B cell (primary cell): ENCODE measurements at regions of chr11 and their contacts with region 1.

Region 1: DNA sequence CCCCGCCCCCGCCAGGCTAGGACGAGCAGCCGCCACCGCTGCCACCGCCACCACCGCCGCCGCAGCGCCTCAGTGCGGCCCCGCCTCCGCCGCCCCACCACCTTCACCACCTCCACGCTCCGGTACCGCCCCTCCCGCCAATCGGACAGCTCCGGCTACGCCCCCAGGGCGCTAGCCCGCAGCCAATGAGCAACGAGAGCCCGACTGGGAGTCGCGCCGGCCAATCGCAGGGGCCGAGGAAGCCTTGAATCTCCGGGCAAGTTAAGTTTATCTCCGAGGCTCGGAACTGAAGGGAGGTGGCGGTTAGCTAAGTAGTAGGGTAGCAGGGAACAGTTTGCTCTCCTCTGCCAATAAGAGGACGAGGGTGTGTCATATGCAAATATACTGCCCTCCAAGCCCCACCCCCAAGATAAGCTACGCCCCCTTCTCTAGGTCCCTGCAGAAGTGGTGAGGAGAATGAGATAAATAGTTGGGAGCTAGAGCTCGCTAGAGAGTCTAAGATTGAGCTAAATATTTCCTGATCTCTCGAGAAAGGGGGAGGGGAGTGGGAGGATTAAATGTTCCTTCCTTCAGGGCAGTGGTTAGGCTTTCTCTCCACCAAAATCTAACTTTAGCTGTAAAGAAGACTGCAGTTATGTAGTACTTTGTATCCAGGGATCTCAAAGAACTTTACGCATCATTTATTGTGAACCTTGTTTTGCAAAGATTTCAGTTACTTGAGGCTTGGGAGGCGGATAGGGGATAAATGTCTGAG is at the start of gene SESN3:
- DNase-seq: peak; percentile 99
- ATAC-seq: peak; percentile 83
- H3K4me3 ChIP-seq: peak within 1 kb of the TSS; percentile 73 to 94 (median 88)
- H3K4me3 Mint-ChIP-seq: no peak within 1 kb of the TSS
- H3K27ac ChIP-seq: peak within 1 kb of the TSS; percentile 94 to 96
- H3K27ac Mint-ChIP-seq: peak within 1 kb of the TSS; percentile 95
- H3K4me1 ChIP-seq: peaks cover 29 to 32% of the 10 kb centered on the region in 2 donors
- H3K4me1 Mint-ChIP-seq: peaks cover 31% of the 10 kb centered on the region
- H3K27me3 ChIP-seq: no peaks in the 10 kb centered on the region
- H3K27me3 Mint-ChIP-seq: no peaks in the 10 kb centered on the region
- CTCF ChIP-seq: no peak
- total RNA-seq, gene SESN3: 519 and 537 TPM in 2 replicates

Region 2: DNA sequence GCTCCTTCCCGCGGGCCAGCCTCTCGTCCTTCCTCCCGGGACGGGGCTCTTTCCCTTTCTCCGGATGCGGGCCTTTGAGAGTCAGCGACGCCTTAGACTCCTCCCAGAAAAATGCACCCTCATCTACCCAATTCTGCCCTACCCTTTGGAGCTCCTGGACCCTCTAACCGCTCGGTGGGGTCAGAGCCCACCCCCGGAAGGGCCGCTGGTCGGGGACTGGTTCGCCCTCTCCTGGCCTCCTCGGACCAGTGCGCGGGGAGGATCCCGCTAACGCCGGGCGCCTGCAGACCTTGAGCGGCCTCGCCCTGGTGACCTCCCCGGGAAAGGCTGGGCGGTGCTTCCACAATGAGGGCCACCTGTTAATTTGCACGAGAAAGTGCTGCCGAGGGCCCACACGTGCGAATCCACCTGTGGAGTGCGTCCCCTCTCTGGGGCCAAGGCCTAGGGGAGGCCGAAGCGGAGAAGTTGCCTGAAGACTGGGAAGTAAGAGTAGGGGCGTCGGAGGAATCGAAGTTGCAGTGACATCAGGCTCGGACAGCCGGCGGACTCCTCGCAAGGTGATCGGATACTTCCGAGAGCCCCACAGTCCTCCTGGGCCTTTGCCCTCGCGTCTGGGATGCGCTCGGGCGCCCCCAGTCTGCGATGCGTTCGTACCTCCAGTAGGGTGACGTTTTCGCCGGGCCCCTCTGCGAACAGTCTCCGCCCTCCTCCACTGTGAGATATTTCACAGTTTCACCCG is 80.2 kb before region 1 on chr11:
- CTCF ChIA-PET with region 1: interaction called, 29 read pairs
- POLR2A ChIA-PET with region 1: interaction called, 4 read pairs
- intact Hi-C with region 1: loop called (anchors 1 kb)
- DNase-seq: peak; percentile 96
- ATAC-seq: peak; percentile 90
- H3K4me3 ChIP-seq: peak overlapping the region; percentile 52 to 91 (median 82)
- H3K4me3 Mint-ChIP-seq: peak overlapping the region; percentile 95
- H3K27ac ChIP-seq: peak overlapping the region; percentile 88 to 91
- H3K27ac Mint-ChIP-seq: peak overlapping the region; percentile 96
- H3K4me1 ChIP-seq: peaks cover 28 to 43% of the 10 kb centered on the region in 2 donors
- H3K4me1 Mint-ChIP-seq: peaks cover 46% of the 10 kb centered on the region
- H3K27me3 ChIP-seq: no peaks in the 10 kb centered on the region
- H3K27me3 Mint-ChIP-seq: no peaks in the 10 kb centered on the region
- CTCF ChIP-seq: peak; percentile 86

Region 3: DNA sequence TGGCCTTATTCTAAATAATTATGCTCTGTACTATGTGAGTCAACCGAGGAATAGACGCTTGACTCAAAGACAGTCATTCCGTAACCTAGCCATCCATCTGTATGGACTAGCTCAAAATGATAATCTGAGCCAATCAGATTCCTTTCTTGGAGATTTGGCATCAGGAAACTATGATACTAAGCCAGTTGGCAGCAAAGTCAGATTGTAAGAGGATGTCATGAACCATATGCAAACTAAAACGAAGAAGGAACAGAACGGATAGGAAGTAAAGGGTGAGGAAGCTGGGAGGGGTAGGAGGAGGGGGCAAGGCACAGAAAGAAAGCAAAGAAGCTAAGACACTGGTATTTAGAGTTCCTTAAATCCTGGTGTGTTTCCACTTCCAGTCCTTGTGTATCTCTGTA is 10.4 kb after region 1 on chr11:
- CTCF ChIA-PET with region 1: interaction called, 8 read pairs
- POLR2A ChIA-PET with region 1: interaction called, 7 read pairs
- intact Hi-C with region 1: loop called (anchors 1 kb)
- DNase-seq: peak; percentile 40
- ATAC-seq: peak; percentile 68
- H3K4me3 ChIP-seq: peak overlapping the region in 3 of 5 experiments; percentile 6 to 59 (median 27)
- H3K4me3 Mint-ChIP-seq: peak overlapping the region; percentile 47
- H3K27ac ChIP-seq: peak overlapping the region; percentile 8 to 58
- H3K27ac Mint-ChIP-seq: peak overlapping the region; percentile 78
- H3K4me1 ChIP-seq: peaks cover 14 to 15% of the 10 kb centered on the region in 2 donors
- H3K4me1 Mint-ChIP-seq: peaks cover 22% of the 10 kb centered on the region
- H3K27me3 ChIP-seq: no peaks in the 10 kb centered on the region
- H3K27me3 Mint-ChIP-seq: no peaks in the 10 kb centered on the region
- CTCF ChIP-seq: no peak

Region 4: DNA sequence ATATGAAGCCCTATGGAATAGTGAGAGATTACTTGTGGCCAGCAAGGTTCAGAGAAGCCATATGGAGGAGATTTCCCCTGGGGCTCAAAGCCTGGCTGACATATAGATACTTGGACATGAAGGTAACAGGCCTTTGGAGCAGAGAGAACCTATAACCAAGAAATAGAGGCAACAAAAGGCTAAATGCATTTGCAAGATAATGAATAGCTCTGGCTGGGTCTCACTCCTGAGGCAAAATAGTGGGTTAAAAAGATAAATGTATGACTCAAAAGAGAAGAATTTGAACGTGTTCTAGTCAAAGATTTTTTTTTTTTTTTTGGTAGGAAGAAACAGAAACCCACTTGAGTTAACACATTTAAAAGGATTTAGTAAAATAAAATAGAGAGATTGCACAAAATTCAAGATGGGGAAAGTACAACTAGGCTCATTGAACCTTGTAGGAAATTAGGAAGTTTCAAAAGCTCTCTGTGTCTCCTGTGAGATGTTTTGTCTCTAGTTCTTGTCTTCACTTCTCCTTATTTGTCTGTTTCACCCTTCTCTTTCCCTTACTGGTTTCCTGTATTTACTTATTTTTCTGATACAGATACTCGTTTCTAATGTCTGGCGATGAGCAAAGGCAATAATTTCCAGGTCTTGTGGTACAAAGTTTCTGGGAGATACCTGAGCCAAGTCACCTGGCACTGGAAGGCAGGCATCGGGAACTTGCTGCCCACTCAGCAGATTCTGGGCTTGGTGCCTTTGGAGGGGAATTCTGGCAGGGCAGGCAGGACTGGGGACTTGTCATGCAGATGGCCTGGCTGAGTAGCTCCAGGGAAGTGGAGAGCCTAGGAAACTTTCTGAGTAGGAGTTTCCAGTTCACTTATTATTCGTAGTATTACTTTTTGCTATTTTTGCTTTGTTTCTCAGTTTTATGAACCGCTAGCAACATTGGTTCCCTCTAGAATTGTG is 48.9 kb after region 1 on chr11:
- CTCF ChIA-PET with region 1: no interaction called
- POLR2A ChIA-PET with region 1: interaction called, 11 read pairs
- intact Hi-C with region 1: no loop called
- DNase-seq: peak; percentile 61
- ATAC-seq: peak; percentile 70
- H3K4me3 ChIP-seq: peak overlapping the region in 2 of 5 experiments; percentile 16 to 48
- H3K4me3 Mint-ChIP-seq: peak overlapping the region; percentile 83
- H3K27ac ChIP-seq: peak overlapping the region; percentile 77 to 84
- H3K27ac Mint-ChIP-seq: peak overlapping the region; percentile 94
- H3K4me1 ChIP-seq: peaks cover 23 to 35% of the 10 kb centered on the region in 2 donors
- H3K4me1 Mint-ChIP-seq: peaks cover 40% of the 10 kb centered on the region
- H3K27me3 ChIP-seq: no peaks in the 10 kb centered on the region
- H3K27me3 Mint-ChIP-seq: no peaks in the 10 kb centered on the region
- CTCF ChIP-seq: no peak

Region 5: DNA sequence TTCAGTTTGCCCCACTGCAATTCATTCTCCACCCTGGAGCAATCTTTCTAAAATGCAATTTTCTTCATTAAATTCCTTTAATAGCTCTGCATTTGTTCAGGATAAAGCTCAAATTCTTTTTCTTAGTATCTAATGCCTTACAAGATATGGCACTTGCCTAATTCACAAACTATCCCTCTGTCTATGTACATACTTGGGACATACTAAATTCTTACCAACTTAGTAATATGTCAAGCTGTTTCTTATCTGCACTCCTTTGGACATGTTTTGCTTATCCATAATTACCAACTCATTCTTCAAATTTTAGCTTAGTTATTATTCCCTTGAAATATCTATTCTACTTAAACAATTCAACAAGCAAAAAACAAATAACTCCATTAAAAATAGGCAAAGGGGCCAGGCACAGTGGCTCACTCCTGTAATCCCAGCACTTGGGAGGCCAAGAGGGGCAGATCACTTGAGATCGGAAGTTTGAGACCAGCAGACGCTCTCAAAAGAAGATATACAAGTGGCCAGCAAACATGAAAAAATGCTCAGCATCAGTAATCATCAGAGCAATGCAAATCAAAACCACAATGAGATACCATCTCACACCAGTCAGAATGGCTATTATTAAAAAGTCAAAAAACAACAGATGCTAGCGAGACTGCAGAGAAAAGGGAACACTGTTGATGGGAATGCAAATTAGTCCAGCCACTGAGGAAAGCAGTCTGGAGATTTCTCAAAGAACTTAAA is 461.4 kb after region 1 on chr11:
- CTCF ChIA-PET with region 1: interaction called, 20 read pairs
- POLR2A ChIA-PET with region 1: interaction called, 8 read pairs
- intact Hi-C with region 1: no loop called
- DNase-seq: peak; percentile 33
- ATAC-seq: peak; percentile 59
- H3K4me3 ChIP-seq: peak overlapping the region in 1 of 5 experiments; percentile 21
- H3K4me3 Mint-ChIP-seq: no peak overlapping the region
- H3K27ac ChIP-seq: no peak overlapping the region
- H3K27ac Mint-ChIP-seq: no peak overlapping the region
- H3K4me1 ChIP-seq: peaks cover 31 to 33% of the 10 kb centered on the region in 2 donors
- H3K4me1 Mint-ChIP-seq: peaks cover 22% of the 10 kb centered on the region
- H3K27me3 ChIP-seq: no peaks in the 10 kb centered on the region
- H3K27me3 Mint-ChIP-seq: no peaks in the 10 kb centered on the region
- CTCF ChIP-seq: no peak

Region 6: DNA sequence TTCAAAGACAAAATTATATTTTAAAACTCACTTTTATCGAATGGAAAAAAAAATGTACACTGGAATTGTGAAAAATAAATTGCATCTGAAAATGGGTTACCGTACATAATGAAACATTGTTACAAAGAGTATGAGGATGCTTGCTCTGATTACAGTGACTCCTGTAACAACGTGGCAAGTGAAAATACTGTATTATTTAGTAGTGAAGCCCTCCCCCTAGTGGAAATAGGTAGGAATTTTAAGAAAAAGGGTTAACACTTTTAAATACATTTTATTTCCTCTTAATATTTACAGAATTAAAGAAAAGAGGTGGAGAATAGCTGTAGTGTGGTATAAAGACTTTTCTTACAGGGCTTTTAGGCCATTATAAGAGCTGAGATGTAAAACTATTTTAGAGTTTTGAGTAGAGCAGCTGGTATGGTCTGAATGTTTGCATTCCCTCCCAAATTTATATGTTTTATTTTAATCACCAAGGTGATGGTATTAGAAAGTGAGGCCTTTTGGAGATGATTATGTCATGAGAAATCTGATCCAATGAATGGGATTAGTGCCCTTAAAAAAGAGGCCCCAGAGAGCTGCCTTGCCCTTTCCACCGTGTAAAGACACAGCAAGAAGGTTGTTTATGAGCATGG is 533.1 kb after region 1 on chr11:
- CTCF ChIA-PET with region 1: interaction called, 24 read pairs
- POLR2A ChIA-PET with region 1: interaction called, 3 read pairs
- intact Hi-C with region 1: loop called (anchors 2 kb)
- DNase-seq: peak; percentile 78
- ATAC-seq: peak; percentile 92
- H3K4me3 ChIP-seq: no peak overlapping the region
- H3K4me3 Mint-ChIP-seq: no peak overlapping the region
- H3K27ac ChIP-seq: no peak overlapping the region
- H3K27ac Mint-ChIP-seq: no peak overlapping the region
- H3K4me1 ChIP-seq: peaks cover 7% of the 10 kb centered on the region in 2 donors
- H3K4me1 Mint-ChIP-seq: peaks cover 24% of the 10 kb centered on the region
- H3K27me3 ChIP-seq: no peaks in the 10 kb centered on the region
- H3K27me3 Mint-ChIP-seq: no peaks in the 10 kb centered on the region
- CTCF ChIP-seq: peak; percentile 92

Region 7: DNA sequence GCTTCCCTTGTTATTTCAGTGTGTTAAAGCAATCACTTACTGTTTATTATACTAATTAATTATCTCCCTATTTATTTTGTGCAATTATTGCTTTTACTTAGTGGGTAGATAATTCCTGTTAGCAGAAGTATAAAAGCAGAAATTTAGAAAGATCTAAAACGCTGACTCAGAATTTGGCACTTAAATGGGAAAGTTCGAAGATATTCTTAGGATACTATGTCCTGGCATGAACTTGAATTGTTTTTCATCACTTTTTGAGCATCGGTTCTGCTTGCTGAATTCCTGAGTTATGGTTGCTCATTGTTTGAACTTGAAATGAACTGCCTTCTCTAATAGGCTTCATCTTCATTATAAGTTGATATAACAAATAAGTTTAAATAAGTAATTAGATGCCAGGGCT is 1483.9 kb after region 1 on chr11:
- CTCF ChIA-PET with region 1: no interaction called
- POLR2A ChIA-PET with region 1: no interaction called
- intact Hi-C with region 1: no loop called
- DNase-seq: no peak
- ATAC-seq: no peak
- H3K4me3 ChIP-seq: no peak overlapping the region
- H3K4me3 Mint-ChIP-seq: no peak overlapping the region
- H3K27ac ChIP-seq: no peak overlapping the region
- H3K27ac Mint-ChIP-seq: no peak overlapping the region
- H3K4me1 ChIP-seq: no peaks in the 10 kb centered on the region
- H3K4me1 Mint-ChIP-seq: no peaks in the 10 kb centered on the region
- H3K27me3 ChIP-seq: no peaks in the 10 kb centered on the region
- H3K27me3 Mint-ChIP-seq: no peaks in the 10 kb centered on the region
- CTCF ChIP-seq: no peak